B cell (primary cell): ENCODE measurements at regions of chr9 and their contacts with region 1.

Region 1: GRCh38 chr9:136790927-136791641 is at the start of gene TMEM141:
- DNase-seq: peak; percentile 99
- ATAC-seq: peak; percentile 84
- H3K4me3 ChIP-seq: peak within 1 kb of the TSS in 4 of 5 experiments; percentile 69 to 84 (median 80)
- H3K4me3 Mint-ChIP-seq: peak within 1 kb of the TSS; percentile 87
- H3K27ac ChIP-seq: peak within 1 kb of the TSS; percentile 97 to 99
- H3K27ac Mint-ChIP-seq: peak within 1 kb of the TSS; percentile 95
- H3K4me1 ChIP-seq: peaks cover 18 to 27% of the 10 kb centered on the region in 2 donors
- H3K4me1 Mint-ChIP-seq: peaks cover 23% of the 10 kb centered on the region
- H3K27me3 ChIP-seq: no peaks in the 10 kb centered on the region
- H3K27me3 Mint-ChIP-seq: peaks cover under 1% of the 10 kb centered on the region
- CTCF ChIP-seq: no peak
- total RNA-seq, gene TMEM141: 35.7 and 39.1 TPM in 2 replicates

Region 2: DNA sequence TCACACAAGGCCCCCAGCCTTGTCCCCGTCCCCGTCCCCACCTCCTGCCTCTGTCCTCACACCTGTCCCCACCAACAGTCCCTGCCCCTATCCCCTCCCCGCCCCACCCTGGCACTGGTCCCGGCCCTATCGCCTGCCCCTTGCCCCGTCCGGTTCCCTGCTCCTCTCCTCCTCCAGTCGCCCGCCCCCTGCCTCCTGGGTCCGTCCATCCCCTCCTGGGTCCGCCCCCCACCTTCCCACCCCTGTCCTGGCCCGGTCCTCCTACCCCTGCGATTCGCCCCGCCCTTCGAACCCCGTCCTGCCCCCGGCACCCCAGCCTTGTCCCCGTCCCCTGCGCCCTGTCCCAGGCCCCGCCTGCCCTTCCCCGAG is 74.6 kb after region 1 on chr9:
- CTCF ChIA-PET with region 1: no interaction called
- POLR2A ChIA-PET with region 1: no interaction called
- intact Hi-C with region 1: loop called (anchors 1 kb)
- DNase-seq: no peak
- ATAC-seq: no peak
- H3K4me3 ChIP-seq: peak overlapping the region in 4 of 5 experiments; percentile 62 to 85 (median 74)
- H3K4me3 Mint-ChIP-seq: peak overlapping the region; percentile 90
- H3K27ac ChIP-seq: peak overlapping the region; percentile 48 to 92
- H3K27ac Mint-ChIP-seq: peak overlapping the region; percentile 61
- H3K4me1 ChIP-seq: peaks cover 8 to 19% of the 10 kb centered on the region in 2 donors
- H3K4me1 Mint-ChIP-seq: peaks cover 19% of the 10 kb centered on the region
- H3K27me3 ChIP-seq: no peaks in the 10 kb centered on the region
- H3K27me3 Mint-ChIP-seq: no peaks in the 10 kb centered on the region
- CTCF ChIP-seq: no peak

Region 3: DNA sequence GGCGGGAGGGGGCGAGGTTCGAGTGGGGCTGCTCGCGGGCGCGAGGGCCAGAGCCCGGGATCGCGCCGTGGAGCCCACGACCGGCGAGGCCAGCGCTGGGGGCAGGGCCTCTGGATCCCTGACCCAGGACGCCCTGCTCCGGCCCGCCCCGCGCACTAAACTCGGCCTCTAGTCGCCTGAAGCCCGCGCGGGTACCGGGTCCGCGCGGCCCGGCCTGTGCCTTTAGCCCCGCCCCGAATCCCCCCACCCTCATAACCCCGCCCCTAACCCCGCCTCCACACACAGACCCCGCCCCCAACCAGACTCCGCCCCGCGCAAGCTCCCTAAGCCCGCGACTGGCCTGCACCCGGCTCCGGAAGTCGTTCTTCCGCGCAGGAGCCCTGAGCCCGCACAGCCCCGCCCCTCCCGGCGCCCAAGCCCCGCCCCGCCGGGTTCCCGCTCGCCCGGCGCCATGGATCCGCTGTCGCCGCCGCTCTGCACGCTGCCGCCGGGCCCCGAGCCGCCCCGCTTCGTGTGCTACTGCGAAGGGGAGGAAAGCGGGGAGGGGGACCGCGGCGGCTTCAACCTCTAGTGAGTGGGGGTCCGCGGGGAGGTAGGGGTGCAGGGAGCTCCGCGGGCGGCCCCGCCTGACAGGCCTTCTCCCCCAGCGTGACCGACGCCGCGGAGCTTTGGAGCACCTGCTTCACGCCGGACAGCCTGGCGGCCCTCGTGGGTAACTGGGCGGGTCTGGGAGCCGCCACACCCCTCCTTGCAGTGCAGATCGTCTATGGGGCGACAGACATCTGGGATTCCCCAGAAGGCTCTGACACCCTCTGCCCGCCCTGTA is 201.1 kb after region 1 on chr9 and contains the start of gene PAXX:
- CTCF ChIA-PET with region 1: interaction called, 4 read pairs
- POLR2A ChIA-PET with region 1: no interaction called
- intact Hi-C with region 1: loop called (anchors 2 kb)
- DNase-seq: peak; percentile 92
- ATAC-seq: peak; percentile 91
- H3K4me3 ChIP-seq: peak within 1 kb of the TSS; percentile 32 to 71 (median 66)
- H3K4me3 Mint-ChIP-seq: peak within 1 kb of the TSS; percentile 91
- H3K27ac ChIP-seq: peak within 1 kb of the TSS; percentile 76 to 97
- H3K27ac Mint-ChIP-seq: peak within 1 kb of the TSS; percentile 91
- H3K4me1 ChIP-seq: peaks cover 27 to 38% of the 10 kb centered on the region in 2 donors
- H3K4me1 Mint-ChIP-seq: peaks cover 26% of the 10 kb centered on the region
- H3K27me3 ChIP-seq: peaks cover 0 to 3% (median 0%) of the 10 kb centered on the region in 4 experiments
- H3K27me3 Mint-ChIP-seq: peaks cover 6% of the 10 kb centered on the region
- CTCF ChIP-seq: no peak
- total RNA-seq, gene PAXX: 73.0 and 74.8 TPM in 2 replicates

Region 4: GRCh38 chr9:137064027-137064879 is 273.2 kb after region 1 on chr9:
- CTCF ChIA-PET with region 1: interaction called, 20 read pairs
- POLR2A ChIA-PET with region 1: no interaction called
- intact Hi-C with region 1: no loop called
- DNase-seq: peak; percentile 70
- ATAC-seq: peak; percentile 32
- H3K4me3 ChIP-seq: no peak overlapping the region
- H3K4me3 Mint-ChIP-seq: no peak overlapping the region
- H3K27ac ChIP-seq: no peak overlapping the region
- H3K27ac Mint-ChIP-seq: peak overlapping the region; percentile 46
- H3K4me1 ChIP-seq: peaks cover 5 to 19% of the 10 kb centered on the region in 2 donors
- H3K4me1 Mint-ChIP-seq: peaks cover 8% of the 10 kb centered on the region
- H3K27me3 ChIP-seq: peaks cover 0 to 11% (median under 1%) of the 10 kb centered on the region in 4 experiments
- H3K27me3 Mint-ChIP-seq: peaks cover 6% of the 10 kb centered on the region
- CTCF ChIP-seq: peak; percentile 86

Region 5: DNA sequence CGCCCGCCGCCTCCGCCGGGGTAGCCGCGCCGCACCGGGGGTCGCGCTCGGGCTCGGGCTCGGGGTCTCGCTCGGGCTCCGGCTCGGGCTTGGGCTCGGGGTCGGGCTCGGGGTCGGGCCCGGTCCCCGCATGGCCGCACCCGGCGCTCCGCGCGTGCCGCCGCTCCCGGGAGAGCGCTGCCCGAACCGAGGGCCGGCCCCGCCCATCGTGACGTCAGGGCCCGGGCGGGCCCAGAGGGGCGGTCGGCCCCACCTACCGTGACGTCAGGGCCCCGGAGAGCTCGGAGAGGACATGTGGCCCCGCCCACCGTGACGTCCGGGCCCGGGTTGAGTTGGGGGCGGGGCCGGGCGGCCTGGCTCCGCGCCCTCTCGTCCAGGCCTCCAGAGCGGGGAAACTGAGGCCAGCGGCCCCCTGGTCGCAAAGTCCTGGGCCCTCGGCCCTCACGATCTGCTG is 668.1 kb after region 1 on chr9 and contains the start of gene NSMF:
- CTCF ChIA-PET with region 1: no interaction called
- POLR2A ChIA-PET with region 1: no interaction called
- intact Hi-C with region 1: loop called (anchors 10 kb)
- DNase-seq: peak; percentile 96
- ATAC-seq: peak; percentile 82
- H3K4me3 ChIP-seq: peak within 1 kb of the TSS in 4 of 5 experiments; percentile 45 to 69 (median 62)
- H3K4me3 Mint-ChIP-seq: peak within 1 kb of the TSS; percentile 75
- H3K27ac ChIP-seq: peak within 1 kb of the TSS; percentile 50 to 63
- H3K27ac Mint-ChIP-seq: peak within 1 kb of the TSS; percentile 75
- H3K4me1 ChIP-seq: peaks cover 49 to 60% of the 10 kb centered on the region in 2 donors
- H3K4me1 Mint-ChIP-seq: peaks cover 34% of the 10 kb centered on the region
- H3K27me3 ChIP-seq: no peaks in the 10 kb centered on the region
- H3K27me3 Mint-ChIP-seq: no peaks in the 10 kb centered on the region
- CTCF ChIP-seq: no peak
- total RNA-seq, gene NSMF: 28.7 and 35.7 TPM in 2 replicates